ENCODE measurements at regions of chr9 and their contacts with region 1.

Region 1: DNA sequence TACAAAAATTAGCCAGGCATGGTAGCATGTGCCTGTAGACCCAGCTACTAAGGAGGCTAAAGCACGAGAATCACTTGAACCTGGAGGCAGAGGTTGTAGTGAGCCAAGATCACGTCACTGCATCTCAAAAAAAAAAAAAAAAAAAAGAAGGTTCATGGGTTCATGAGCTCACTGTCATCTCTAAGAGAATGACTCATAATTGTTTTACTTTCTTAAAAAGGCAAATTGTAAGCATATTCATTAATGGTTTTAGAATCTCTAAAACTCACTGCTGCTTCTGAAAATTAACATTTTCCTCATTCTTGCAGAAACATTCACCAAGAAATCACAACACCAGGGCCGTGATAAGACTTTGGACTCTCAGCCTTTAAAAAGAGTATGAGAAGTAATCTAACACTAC is 103.6 kb downstream of the GNA14 start:
- DNase-seq: no peak
- ATAC-seq: no peak
- H3K4me3 ChIP-seq: no peak overlapping the region
- H3K27ac ChIP-seq: no peak overlapping the region
- H3K4me1 ChIP-seq: no peaks in the 10 kb centered on the region
- H3K27me3 ChIP-seq: no peaks in the 10 kb centered on the region
- CTCF ChIP-seq: no peak

Region 2: DNA sequence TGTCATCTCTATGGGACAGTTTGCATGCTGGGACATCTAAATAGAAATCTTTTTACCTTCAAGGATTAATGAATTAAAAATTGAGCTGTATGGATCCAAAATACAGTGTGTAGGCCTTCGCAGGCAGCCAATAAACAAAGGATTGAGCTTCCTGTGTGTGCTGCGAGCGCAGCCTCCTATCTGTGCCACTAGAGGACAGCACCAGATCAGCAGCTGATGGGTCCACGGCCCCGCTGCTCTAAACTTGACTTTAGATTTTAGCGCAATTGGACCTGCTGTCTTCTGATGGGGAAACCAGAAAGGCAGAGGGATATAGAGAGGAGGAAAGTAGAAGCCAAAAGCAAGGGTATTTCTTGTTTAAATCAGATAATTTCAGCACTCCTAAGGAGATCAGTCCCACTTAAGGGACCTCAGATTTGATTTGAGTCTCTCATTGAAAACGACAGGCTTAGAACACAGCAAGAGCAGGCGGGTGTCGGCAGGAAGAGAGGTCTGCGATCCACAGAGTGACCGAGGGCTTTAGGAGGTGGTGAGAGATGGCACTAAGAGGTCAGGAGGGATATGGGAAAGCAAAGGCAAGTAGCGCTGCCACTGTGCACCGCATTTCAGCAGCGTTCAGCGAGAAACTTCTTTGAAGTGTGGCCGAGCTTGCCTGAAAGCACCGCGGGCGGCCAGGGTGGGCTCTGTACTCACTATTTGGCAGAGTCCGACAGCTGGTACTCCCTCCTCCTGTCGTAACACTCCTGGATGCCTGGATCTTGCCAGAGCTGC is 110.7 kb before region 1 on chr9:
- intact Hi-C with region 1: no loop called
- DNase-seq: peak; percentile 50 to 68
- ATAC-seq: peak; percentile 70 to 90 (median 81)
- H3K4me3 ChIP-seq: no peak overlapping the region
- H3K27ac ChIP-seq: no peak overlapping the region
- H3K4me1 ChIP-seq: no peaks in the 10 kb centered on the region
- H3K27me3 ChIP-seq: peaks cover 0 to 3% (median 0%) of the 10 kb centered on the region in 3 donors
- CTCF ChIP-seq: peak; percentile 92

Region 3: GRCh38 chr9:77569173-77569734 is 24.7 kb after region 1 on chr9:
- intact Hi-C with region 1: loop called in 1 of 2 experiments (anchors 2 kb)
- DNase-seq: no peak
- ATAC-seq: no peak
- H3K4me3 ChIP-seq: no peak overlapping the region
- H3K27ac ChIP-seq: no peak overlapping the region
- H3K4me1 ChIP-seq: no peaks in the 10 kb centered on the region
- H3K27me3 ChIP-seq: no peaks in the 10 kb centered on the region
- CTCF ChIP-seq: no peak

Region 4: GRCh38 chr9:77616191-77616590 is 71.6 kb after region 1 on chr9:
- intact Hi-C with region 1: no loop called
- DNase-seq: no peak
- ATAC-seq: no peak
- H3K4me3 ChIP-seq: no peak overlapping the region
- H3K27ac ChIP-seq: no peak overlapping the region
- H3K4me1 ChIP-seq: no peaks in the 10 kb centered on the region
- H3K27me3 ChIP-seq: no peaks in the 10 kb centered on the region
- CTCF ChIP-seq: no peak

Measured in psoas muscle (tissue), 8 donors.